ENCODE measurements at regions of chr12 and their contacts with region 1.

Region 1: DNA sequence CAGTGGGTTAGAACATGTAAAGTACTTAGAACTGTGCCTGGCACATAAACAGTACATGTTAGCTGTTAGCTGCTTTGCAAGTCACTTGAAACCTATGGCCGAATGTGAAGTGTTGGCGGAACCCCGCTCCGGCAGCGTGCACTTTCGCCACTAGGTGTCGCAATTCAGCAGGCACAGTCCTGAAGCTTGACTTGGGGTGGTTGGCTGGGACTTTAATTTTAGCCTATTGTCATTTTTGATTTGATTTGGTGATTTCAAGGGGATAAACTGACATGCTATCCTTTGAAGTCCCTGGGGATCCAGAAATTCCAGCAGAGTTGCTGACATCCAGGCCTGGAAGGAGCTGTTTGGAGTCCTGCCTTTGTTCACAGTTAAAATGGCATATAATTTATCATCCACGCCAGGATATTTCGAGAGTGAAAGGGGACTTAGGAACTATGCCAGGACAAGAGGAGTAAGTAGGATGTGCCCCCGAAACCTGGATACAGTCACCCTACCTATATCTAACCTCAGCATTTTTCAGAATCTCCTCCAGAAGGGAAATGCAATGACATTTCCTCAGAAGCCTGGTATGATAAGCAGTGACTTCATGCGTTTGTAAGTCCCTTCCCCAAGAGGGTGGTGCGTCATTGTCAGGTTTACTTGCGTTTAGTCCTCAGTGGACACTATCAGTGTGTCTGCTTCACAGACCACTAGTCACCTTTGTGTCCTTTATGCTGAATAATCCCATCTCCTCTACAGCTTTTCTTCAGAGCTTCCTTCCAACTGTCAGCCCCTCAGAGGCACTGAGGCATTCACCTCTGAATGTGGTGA is 3.5 kb upstream of the TSPAN9 start:
- DNase-seq: peak; percentile 90
- H3K4me3 ChIP-seq: no peak overlapping the region; a peak in 1 of 4 replicates
- H3K27ac ChIP-seq: no peak overlapping the region
- H3K4me1 ChIP-seq: peaks cover 0 to 14% of the 10 kb centered on the region in 2 experiments; a peak in 2 of 4 replicates
- H3K27me3 ChIP-seq: no peaks in the 10 kb centered on the region
- CTCF ChIP-seq: peak; percentile 99
- EP300 ChIP-seq: no peak
- RAD21 ChIP-seq: peak; percentile 94

Region 2: DNA sequence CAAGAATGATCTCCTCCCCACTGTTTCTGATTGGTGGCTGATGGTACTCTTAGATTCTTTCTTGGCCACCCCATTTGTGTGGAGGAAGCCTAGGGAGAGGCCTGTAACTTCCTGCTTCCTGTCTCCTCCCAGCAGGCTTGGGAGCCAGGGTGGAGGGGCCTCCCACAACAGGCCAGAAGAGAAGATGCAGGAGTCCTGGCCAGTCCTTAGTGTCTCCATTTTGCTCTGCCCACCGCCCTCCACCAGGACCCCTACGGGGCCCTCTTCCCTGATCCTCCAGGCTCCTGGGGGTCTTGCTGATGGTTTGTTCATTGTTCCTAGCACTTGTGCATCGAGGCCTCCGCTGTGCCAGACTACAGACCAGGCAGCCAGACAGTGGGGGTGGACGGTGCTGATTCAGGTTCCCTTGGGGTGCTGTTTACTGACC is 10.3 kb after region 1 on chr12:
- CTCF ChIA-PET with region 1: interaction called, 11 read pairs
- POLR2A ChIA-PET with region 1: no interaction called
- DNase-seq: no peak
- H3K4me3 ChIP-seq: no peak overlapping the region
- H3K27ac ChIP-seq: no peak overlapping the region
- H3K4me1 ChIP-seq: peaks cover 0 to 21% of the 10 kb centered on the region in 2 experiments; a peak in 2 of 4 replicates
- H3K27me3 ChIP-seq: no peaks in the 10 kb centered on the region
- CTCF ChIP-seq: no peak
- EP300 ChIP-seq: no peak
- RAD21 ChIP-seq: no peak

Region 3: DNA sequence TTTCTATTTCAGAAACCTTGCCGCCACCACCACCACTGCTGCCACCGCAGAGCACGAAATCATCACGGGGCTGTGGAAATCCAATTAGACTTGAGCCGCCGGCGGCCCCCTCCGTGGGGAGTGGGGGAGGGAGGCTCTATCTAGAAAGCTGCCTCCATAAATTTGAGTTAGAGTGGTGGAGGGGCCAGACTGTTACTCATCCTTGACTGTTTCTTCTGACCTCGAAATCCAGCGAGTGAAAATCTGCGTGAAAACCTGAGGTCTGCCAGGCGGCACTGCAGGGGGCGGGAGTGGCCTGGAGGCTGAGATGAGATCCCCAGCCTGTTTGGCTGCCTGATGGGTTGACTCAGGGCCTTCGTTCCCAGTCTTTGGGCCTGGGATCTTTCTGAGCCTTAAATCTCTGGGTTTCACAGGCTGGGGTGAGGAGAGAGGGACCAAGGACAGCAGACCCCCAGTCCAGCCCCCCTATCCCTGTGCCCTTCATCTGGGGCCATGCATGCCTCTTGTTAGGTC is 33.5 kb after region 1 on chr12:
- CTCF ChIA-PET with region 1: interaction called, 41 read pairs
- POLR2A ChIA-PET with region 1: interaction called, 3 read pairs
- DNase-seq: peak; percentile 65
- H3K4me3 ChIP-seq: no peak overlapping the region
- H3K27ac ChIP-seq: peak overlapping the region; percentile 29 to 77
- H3K4me1 ChIP-seq: peaks cover 35 to 48% of the 10 kb centered on the region in 2 experiments; a peak in 3 of 4 replicates
- H3K27me3 ChIP-seq: no peaks in the 10 kb centered on the region
- CTCF ChIP-seq: no peak; the same call in 1 of the 2 replicates
- EP300 ChIP-seq: no peak
- RAD21 ChIP-seq: no peak

Region 4: DNA sequence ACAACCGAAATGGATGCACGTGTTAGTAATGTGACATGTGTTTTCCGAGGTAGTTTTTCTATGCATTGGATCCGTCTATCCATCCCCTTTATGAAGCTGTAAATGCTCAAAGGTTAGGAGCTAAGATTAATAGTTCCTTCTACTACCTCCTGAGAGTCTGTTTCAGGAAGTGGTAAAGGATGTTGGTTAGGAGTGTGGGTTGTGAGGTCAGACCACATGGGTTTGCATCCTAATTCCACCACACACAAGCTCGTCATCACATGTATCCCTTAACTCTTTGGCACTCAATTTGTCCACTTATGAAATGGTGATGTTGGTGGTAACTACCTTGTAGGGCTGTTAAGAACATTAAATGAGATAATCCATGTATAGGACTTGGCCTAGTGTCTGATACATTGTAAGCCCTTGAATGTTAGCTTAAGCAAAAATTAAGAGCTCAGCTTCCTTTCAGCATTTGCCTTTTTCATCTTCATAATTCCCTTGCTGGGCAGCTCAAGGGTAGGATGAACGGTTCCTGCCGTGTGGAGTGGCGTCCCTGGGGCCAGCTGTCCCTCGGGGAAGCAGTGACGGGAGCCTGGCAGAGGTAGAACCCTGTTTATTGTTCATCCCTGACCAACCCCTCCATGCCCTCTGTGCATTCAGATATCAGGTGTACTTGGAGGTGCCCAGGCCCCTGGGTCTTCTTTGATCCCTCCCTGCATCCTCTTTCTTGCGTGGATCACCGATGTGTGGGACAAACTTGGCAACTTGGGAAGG is 55.8 kb after region 1 on chr12:
- CTCF ChIA-PET with region 1: interaction called, 20 read pairs
- POLR2A ChIA-PET with region 1: no interaction called
- DNase-seq: no peak
- H3K4me3 ChIP-seq: no peak overlapping the region
- H3K27ac ChIP-seq: no peak overlapping the region
- H3K4me1 ChIP-seq: peaks cover 6 to 19% of the 10 kb centered on the region in 2 experiments; a peak in 3 of 4 replicates
- H3K27me3 ChIP-seq: no peaks in the 10 kb centered on the region
- CTCF ChIP-seq: no peak
- EP300 ChIP-seq: no peak
- RAD21 ChIP-seq: no peak

Region 5: GRCh38 chr12:3168223-3169221 is 94.9 kb after region 1 on chr12:
- CTCF ChIA-PET with region 1: interaction called, 10 read pairs
- POLR2A ChIA-PET with region 1: no interaction called
- DNase-seq: no peak
- H3K4me3 ChIP-seq: no peak overlapping the region
- H3K27ac ChIP-seq: peak overlapping the region in 1 of 2 experiments; percentile 95; a peak in 2 of 4 replicates
- H3K4me1 ChIP-seq: peaks cover 49 to 56% of the 10 kb centered on the region in 2 experiments
- H3K27me3 ChIP-seq: no peaks in the 10 kb centered on the region
- CTCF ChIP-seq: no peak
- EP300 ChIP-seq: peak in 1 of 2 experiments; percentile 39; a peak in 1 of 4 replicates
- RAD21 ChIP-seq: no peak